Activated CD4-positive, alpha-beta T cell treated with anti-CD3 and anti-CD28 coated beads, Interleukin-2, amount 10 ng/mL, durations not matched to agents 7 days and 5 days (primary cell): ENCODE measurements at regions of chr11 and their contacts with region 1.

Region 1: DNA sequence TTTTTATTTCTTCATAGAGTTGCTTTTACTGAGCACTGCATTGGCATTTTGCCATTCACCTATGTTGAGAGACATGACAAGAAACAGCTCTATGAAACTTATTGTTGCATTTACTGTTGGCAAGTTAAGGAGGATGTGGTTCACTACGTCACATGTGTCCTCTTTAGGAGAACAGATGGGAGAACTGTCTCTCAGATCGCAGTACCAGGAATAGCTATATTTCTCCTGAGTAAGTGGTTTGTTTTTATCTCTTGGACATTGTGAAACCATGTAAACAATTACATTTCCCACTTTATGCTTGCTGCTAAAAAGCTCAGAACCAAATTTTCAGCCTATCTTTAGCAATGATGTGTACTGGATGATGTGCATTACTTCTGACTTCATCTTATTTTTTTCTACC is 34.8 kb upstream of the PSMA1 start:
- DNase-seq: peak; percentile 63
- H3K4me3 Mint-ChIP-seq: peak overlapping the region; percentile 21
- H3K27ac Mint-ChIP-seq: peak overlapping the region; percentile 82
- H3K4me1 Mint-ChIP-seq: peaks cover 34% of the 10 kb centered on the region
- H3K27me3 Mint-ChIP-seq: no peaks in the 10 kb centered on the region

Region 2: DNA sequence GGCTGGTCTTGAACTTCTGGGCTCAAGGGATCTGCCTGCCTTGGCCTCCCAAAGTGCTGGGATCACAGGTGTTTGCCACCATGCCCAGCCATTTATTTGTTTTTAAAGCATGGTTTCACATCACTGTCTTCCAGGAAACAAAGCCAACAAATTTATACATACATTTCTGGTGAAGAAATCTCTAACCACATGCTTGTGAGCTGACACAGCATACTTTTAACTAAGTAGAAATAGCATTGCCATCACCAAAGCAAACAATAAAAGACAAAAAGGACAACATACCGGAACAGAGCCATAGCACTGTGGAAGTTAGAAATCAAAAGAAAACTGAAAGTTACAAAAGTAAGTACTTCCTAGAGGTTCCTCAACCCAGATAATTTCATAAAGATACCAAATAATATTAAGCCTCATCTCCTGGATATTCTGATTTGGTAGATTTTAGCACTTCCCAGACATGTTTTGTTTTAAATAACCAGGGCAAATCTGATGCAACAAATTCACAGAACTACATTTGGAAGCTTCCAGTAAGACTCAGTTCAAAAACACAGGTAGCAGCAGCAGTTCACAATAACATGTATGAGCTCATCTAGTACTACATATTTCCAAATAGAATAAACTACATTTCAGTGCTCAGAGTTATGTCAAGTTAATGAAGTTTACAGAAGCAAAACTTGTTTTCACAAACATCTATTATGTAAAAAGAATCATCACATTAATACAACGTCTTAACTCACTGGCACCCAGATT is 266.6 kb before region 1 on chr11:
- CTCF ChIA-PET with region 1: no interaction called
- POLR2A ChIA-PET with region 1: no interaction called
- DNase-seq: peak; percentile 10
- H3K4me3 Mint-ChIP-seq: peak overlapping the region; percentile 11
- H3K27ac Mint-ChIP-seq: peak overlapping the region; percentile 89
- H3K4me1 Mint-ChIP-seq: peaks cover 27% of the 10 kb centered on the region
- H3K27me3 Mint-ChIP-seq: no peaks in the 10 kb centered on the region

Region 3: DNA sequence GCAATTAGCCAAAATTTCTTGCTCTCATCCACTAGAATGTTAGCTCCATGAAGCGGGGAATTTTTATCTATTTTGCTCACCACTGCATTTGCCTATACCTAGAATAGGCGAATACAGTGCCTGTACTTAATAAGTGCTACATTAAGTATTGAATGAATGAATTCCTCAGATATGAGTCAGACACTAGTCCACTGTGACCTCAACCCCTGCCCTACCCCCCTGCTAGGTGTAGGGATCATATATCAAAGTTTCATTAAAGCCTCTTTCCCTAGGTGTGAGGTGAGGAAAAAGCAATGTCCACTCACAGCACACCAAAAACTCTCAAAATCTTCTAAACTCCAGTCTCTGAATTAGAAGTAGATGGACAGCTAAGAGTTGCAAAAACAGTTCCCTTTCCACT is 25.0 kb before region 1 on chr11:
- CTCF ChIA-PET with region 1: no interaction called
- POLR2A ChIA-PET with region 1: no interaction called
- DNase-seq: no peak
- H3K4me3 Mint-ChIP-seq: no peak overlapping the region
- H3K27ac Mint-ChIP-seq: no peak overlapping the region
- H3K4me1 Mint-ChIP-seq: no peaks in the 10 kb centered on the region
- H3K27me3 Mint-ChIP-seq: no peaks in the 10 kb centered on the region

Region 4: DNA sequence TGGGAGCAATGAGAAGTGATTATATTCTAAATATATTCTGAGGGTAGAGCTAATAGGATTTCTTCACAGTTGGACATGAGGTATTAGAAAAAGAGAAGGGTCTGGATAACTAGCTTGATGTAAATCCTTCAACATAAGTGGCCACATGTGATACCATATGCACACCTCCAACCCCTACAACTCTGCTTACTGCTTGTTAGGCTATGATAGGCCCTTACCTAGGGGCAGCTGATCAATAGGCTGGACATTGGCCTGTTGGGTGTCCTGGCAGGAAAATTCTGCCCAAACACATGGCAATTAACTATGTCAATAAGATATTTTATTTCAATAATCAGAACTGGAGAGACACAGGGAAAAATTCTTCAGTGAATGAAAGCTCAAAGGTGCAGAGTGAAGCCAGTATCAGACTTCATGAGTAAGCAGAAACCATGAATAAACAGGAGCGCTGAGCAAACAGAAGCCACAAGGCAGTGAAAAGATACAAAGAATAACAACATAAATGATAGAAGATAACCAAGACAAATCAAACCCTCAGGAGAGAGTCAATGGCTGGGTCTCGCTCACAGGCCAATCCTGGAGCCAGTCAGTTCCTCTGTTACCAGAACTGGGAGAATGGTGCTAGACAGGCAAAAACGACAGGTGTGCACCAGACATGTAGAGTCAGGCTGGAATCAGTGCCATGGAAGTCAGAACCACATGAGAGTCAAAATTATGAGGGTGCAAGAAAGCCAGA is 11.5 kb after region 1 on chr11:
- CTCF ChIA-PET with region 1: interaction called, 16 read pairs
- POLR2A ChIA-PET with region 1: no interaction called
- DNase-seq: no peak
- H3K4me3 Mint-ChIP-seq: no peak overlapping the region
- H3K27ac Mint-ChIP-seq: no peak overlapping the region
- H3K4me1 Mint-ChIP-seq: peaks cover 63% of the 10 kb centered on the region
- H3K27me3 Mint-ChIP-seq: no peaks in the 10 kb centered on the region

Region 5: DNA sequence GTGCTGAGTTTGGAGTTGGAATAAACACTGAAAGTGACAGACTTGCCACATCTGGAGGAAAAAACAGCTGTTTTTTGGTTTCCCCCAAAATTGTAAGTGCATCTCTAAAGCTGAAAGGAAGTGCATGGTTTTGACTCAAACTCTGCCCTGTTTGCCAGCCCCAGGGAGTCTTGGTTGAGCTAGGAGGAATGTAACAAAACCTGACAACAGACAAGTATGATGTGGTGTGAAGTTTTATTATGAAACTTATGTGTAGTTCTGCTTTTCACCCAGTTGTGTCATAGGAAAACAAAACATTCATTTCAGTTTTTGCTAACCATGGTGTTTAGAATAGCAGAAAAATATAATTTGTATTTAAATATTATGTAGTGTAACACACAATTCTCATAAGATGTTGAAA is 57.0 kb after region 1 on chr11:
- CTCF ChIA-PET with region 1: no interaction called
- POLR2A ChIA-PET with region 1: no interaction called
- DNase-seq: no peak
- H3K4me3 Mint-ChIP-seq: no peak overlapping the region
- H3K27ac Mint-ChIP-seq: no peak overlapping the region
- H3K4me1 Mint-ChIP-seq: peaks cover 17% of the 10 kb centered on the region
- H3K27me3 Mint-ChIP-seq: no peaks in the 10 kb centered on the region